A549 (cell line): ENCODE measurements at regions of chr7 and their contacts with region 1.

Region 1: DNA sequence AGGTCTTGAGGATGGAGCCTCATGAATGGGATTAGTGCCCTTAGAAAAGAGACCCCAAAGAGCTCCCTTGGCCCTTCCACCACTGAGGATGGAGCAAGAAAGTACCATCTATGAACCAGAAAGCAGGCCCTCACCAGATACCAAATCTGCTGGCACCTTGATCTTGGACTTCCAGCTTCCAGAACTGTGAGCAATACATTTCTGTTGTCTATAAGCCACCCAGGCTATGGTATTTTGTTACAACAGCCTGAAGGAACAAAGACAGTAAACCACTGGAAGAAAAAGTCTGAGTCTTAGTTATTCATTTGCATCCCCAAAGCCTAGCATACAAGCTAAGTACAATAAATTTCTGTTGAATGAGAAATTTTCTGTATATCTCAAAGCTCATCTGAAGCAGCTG is 37.9 kb upstream of the TNS3 start:
- DNase-seq: no peak
- ATAC-seq: no peak
- H3K4me3 ChIP-seq: no peak overlapping the region
- H3K27ac ChIP-seq: peak overlapping the region; percentile 53 to 83
- H3K4me1 ChIP-seq: peaks cover 33% of the 10 kb centered on the region
- CTCF ChIP-seq: no peak
- EP300 ChIP-seq: no peak
- POLR2A ChIP-seq: no peak
- RAD21 ChIP-seq: no peak

Region 2: GRCh38 chr7:47571331-47572093 is 48.3 kb before region 1 on chr7:
- CTCF ChIA-PET with region 1: no interaction called
- POLR2A ChIA-PET with region 1: no interaction called
- DNase-seq: peak in 1 of 2 experiments; percentile 81
- ATAC-seq: peak; percentile 38 to 55
- H3K4me3 ChIP-seq: peak overlapping the region; percentile 10; the same call in 2 of the 3 replicates
- H3K27ac ChIP-seq: peak overlapping the region; percentile 99 to 100
- H3K4me1 ChIP-seq: peaks cover 99% of the 10 kb centered on the region
- CTCF ChIP-seq: no peak
- EP300 ChIP-seq: peak in 1 of 2 experiments; percentile 48; a peak in 1 of 5 replicates
- POLR2A ChIP-seq: no peak
- RAD21 ChIP-seq: 0 out of 5 replicates have a peak, but pooled peaks of 1 of the 2 experiments have one; percentile 12

Region 3: DNA sequence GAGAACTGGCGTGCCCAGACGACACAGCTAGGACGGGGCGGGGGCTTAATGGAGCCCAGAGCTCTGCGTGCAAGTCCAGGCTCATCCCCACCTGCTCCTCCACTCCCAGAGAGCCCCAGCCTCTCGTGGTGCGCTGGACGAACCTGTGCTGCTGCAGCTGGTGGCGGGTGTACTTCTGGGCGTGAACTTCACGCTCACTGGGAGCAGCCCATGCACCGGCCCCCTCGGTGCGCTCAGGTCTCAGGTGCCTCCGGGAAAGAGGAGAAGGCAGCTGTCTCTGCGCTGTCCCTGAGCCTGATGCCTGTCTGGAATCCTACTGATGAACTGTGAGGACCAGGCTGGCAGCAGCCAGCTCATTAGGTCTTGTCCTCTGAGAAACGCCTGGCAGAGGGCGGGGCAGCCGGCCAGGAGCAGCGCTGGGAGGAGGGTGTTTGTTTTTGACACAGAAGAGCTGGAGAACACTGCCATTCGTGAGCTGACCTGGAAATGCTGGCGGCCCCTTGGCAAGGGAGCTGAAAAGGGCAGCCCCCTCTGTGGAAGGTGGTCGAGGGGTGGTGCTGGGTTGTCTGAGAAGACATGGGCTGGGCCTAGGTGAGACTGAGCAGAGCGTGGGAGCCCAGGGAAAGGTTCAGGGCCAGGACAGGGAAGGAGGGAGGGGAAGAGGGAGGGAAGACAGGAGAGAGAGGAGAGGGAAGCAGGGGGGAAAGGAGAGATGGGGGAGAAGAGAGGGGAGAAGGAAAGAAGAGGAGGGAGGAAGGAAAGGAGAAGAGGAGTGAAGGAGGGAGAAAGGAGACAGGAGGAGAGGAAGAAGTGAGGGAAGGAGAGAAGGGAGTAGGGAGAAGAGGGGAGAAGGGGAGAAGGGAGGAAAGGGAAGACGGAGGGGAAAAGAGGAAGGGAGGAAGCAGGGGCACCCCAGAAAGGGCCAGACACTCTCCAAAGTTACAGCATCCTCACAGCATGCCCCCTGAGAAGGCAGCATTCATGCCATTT is 15.6 kb after region 1 on chr7:
- CTCF ChIA-PET with region 1: interaction called, 13 read pairs
- POLR2A ChIA-PET with region 1: interaction called, 5 read pairs
- DNase-seq: peak; percentile 73 to 83
- ATAC-seq: peak; percentile 82 to 86
- H3K4me3 ChIP-seq: peak overlapping the region; percentile 40
- H3K27ac ChIP-seq: peak overlapping the region; percentile 89 to 90
- H3K4me1 ChIP-seq: peaks cover 65% of the 10 kb centered on the region
- CTCF ChIP-seq: no peak
- EP300 ChIP-seq: no peak
- POLR2A ChIP-seq: peak; percentile 59
- RAD21 ChIP-seq: no peak; a peak in 1 of 5 replicates